ENCODE measurements at regions of chr6 and their contacts with region 1.

Region 1: DNA sequence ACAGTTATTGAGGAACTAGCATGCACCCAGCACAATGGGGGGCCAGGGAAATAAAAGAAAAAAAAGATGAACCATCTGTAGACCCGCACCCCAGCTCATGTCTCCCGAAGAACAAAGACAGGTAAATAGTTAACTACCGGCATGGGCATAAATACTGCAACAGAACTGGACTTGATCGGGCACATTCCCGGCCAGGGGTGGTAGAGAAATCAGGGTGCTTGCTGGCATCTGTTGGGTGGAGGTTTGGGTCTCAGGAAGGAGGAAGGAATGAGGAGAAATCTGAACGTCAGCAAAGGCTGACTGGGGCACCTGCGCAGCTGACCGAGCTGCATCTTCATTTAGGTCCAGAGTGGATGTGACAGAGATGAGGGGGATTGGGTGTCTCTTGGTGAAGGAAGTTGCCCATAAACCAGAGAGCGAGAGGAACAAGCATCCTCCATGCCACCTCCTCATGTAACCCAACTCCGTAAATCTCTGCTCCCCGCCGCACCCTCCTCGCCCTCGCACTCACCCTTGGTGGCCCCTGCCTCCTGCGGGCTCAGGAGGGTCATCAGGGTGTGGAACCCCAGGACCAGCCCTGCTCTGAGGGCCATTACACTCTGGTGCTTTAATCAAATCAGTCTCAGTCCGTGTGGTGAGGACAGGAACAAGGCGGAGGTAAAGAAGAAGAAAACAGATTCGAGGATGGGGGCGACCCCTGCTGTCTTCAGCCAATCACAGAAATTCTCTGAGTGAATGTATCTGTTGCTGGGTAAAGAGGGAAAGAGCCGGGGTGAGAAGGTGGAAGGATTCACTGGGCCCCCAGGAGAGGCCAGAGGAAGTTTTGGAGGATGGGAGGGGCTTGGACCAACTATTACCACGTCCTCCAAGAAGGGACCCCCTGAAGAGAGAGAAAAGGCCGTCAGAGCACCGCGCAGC is at the start of gene HLA-DOA:
- DNase-seq: no peak
- ATAC-seq: peak; percentile 41 to 59
- H3K4me3 ChIP-seq: no peak within 1 kb of the TSS
- H3K27ac ChIP-seq: no peak within 1 kb of the TSS
- H3K4me1 ChIP-seq: no peaks in the 10 kb centered on the region
- H3K27me3 ChIP-seq: no peaks in the 10 kb centered on the region
- total RNA-seq, gene HLA-DOA: 1.3 to 2.3 (median 1.8) TPM

Region 2: DNA sequence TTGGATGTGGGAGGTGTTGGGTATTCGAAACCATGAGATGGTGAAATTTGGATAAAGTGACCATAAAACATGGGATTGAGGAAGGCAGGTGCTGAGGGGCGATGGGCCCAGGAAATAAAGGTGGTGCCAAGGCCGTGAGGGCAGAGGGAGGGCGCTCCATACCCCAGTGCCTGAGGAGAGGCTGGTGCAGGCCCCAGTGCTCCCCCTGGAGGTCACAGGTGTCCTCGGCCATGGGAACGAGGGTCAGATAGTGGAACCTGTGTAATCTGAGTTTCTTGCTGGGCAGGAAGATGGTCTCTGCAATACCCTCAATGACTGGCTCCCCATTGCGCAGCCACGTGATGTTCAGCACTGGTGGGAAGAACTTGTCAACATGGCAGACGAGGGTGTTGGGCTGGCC is 82.8 kb after region 1 on chr6:
- intact Hi-C with region 1: loop called in 2 of 4 experiments (anchors 10 kb)
- DNase-seq: peak; percentile 47 to 71 (median 64)
- ATAC-seq: peak; percentile 71 to 72
- H3K4me3 ChIP-seq: no peak overlapping the region
- H3K27ac ChIP-seq: no peak overlapping the region
- H3K4me1 ChIP-seq: no peaks in the 10 kb centered on the region
- H3K27me3 ChIP-seq: no peaks in the 10 kb centered on the region

Region 3: DNA sequence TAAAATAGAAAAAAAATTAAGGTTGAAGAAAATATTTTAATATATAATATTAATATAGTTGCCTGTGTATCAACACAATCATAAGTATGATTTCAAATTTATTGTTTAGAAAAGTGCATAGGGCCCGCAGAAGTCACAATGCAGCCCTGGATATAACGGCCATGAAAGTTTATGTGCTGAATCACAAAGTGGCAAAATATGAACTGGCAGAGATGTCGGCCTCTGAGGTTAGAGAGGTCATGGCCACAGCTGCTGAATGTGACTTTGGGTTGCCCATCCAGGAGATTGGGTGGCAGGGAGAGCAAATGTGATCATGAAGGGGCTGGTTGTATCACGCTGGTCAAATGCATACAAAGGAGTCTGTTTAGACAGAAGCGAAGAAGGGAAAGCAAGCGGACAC is 147.4 kb after region 1 on chr6:
- intact Hi-C with region 1: loop called in 1 of 4 experiments (anchors 10 kb)
- DNase-seq: no peak
- ATAC-seq: no peak
- H3K4me3 ChIP-seq: no peak overlapping the region
- H3K27ac ChIP-seq: no peak overlapping the region
- H3K4me1 ChIP-seq: no peaks in the 10 kb centered on the region
- H3K27me3 ChIP-seq: no peaks in the 10 kb centered on the region

Region 4: GRCh38 chr6:33547499-33547898 is 538.3 kb after region 1 on chr6:
- intact Hi-C with region 1: no loop called
- DNase-seq: no peak
- ATAC-seq: peak in 1 of 2 donors; percentile 63
- H3K4me3 ChIP-seq: no peak overlapping the region
- H3K27ac ChIP-seq: no peak overlapping the region
- H3K4me1 ChIP-seq: no peaks in the 10 kb centered on the region
- H3K27me3 ChIP-seq: no peaks in the 10 kb centered on the region